ENCODE measurements at regions of chr15 and their contacts with region 1.

Region 1: DNA sequence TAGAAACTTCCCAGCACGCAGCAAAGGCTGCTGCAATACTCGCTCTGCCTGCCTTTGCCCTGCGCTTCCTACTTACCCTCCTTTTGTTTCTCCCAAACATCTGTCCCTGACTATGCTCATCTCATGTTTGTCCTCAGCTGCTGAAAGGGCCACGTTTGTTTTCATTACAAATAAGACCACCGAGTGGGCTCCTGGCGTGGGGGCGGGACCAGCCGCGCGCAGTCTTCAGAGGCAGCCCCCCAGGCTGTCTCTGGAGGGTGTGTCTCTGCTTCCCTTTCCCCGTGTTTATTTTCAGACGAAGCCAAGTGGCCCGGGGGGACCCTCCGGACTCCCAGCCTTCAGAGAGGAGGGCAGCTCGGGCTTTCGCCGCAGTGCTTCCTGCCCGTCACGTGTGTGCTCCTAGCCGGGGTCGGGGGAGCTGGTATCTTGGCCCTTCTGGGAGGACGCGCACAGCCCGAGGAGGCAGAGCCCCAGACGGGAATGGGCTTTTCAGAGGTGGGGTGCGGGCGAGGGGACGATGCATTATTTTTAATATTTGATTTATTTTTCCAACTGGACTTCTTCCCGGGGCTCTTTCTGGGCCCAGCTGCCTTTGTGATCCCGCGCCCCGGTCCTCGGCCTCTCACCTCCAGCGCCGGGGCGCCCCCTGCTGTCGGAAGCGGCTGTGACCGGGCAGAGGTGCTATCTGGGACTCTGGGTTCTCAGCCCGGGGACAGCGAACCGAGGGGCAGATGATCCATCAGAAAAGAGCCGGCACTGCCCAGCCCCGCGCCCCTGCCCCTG is 70.0 kb upstream of the CGNL1 start:
- DNase-seq: peak; percentile 52 to 85 (median 75)
- H3K4me3 ChIP-seq: peak overlapping the region; percentile 36 to 86 (median 65)
- H3K27ac ChIP-seq: peak overlapping the region in 23 of 59 donors; percentile 1 to 81 (median 34)
- H3K27me3 ChIP-seq: no peaks in the 10 kb centered on the region
- CTCF ChIP-seq: peak; percentile 59 to 95 (median 88)

Region 2: DNA sequence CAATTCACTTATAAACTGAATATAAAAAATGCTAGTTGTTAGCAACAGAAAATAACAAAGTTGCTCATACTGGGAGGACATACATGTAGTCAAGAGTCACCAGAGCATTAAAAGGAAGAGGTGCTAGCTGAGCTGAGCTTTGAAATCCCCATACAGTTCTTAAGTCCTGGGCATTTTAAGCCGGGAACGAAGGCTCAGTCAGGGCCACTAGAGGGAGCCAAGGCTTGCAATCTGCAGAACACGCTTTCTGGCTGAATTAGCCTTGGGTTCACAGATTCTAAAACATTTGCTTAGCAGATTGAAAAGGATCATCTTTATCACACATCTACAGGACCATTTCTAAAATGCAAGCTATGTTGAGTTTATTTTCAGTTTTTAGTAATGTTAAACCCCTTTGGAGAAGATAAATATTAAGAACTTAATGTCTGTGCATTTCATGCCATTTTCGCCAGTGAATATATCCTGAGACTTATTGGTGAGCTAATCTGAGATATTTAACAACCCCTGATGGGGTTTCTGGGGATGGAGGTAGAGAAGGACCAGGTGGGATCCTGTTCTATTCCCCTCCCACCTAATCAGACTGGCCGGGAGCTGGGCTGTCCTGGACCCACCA is 815.1 kb before region 1 on chr15:
- intact Hi-C with region 1: loop called (anchors 5 to 10 kb)
- DNase-seq: peak; percentile 43 to 85 (median 74)
- H3K4me3 ChIP-seq: no peak overlapping the region
- H3K27ac ChIP-seq: no peak overlapping the region
- H3K27me3 ChIP-seq: no peaks in the 10 kb centered on the region
- CTCF ChIP-seq: peak; percentile 64 to 90 (median 82)

Region 3: GRCh38 chr15:56821721-56822425 is 484.5 kb before region 1 on chr15:
- intact Hi-C with region 1: loop called in 1 of 2 experiments (anchors 5 kb)
- DNase-seq: peak in 8 of 10 donors; percentile 15 to 74 (median 54)
- H3K4me3 ChIP-seq: no peak overlapping the region
- H3K27ac ChIP-seq: no peak overlapping the region
- H3K27me3 ChIP-seq: no peaks in the 10 kb centered on the region
- CTCF ChIP-seq: peak in 55 of 56 donors; percentile 35 to 91 (median 67)

Region 4: DNA sequence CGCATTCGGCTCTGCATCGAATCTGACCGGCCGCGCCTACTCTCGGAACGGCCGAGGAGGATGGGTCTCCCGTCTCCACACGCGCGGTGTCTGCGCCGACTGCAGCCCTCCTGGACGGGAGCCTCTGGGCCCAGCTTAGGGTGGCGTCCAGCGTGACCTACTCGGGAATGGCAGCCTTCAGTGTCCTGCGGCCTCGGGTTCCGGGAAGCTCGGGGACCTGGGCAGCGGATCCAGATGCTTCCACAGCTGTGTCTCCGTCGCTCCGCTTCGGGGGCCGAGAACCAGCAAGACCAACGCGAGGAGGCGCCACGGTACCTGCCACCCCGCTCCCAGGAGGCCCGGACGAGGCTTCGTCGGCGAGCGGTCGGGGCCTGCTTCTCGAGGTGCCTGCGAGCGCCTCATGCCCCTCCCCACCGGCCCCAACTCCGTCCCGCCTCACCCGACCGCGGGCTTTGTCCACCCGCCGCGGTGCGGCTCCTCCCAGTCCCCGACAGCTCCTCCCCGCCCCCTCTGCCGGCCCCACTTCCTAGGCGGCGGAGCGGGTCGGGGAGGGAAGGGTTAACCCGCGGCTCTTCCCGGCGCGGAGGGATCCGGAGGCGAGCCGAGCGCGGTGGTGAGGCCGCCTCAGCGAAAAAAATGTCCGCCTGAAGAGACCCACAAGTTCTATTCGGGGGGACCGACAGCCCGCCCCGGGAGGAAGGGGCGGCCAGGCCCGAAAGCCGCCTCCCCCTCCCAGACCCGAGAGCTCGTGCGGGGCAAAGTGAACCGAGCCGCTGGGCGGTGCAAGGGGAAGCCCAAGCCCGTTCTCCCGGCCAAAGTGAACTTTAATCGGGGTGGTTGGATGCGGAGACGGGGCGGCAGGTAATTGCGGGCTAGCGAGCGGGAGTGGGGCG is 388.1 kb before region 1 on chr15 and contains the start of gene TCF12:
- intact Hi-C with region 1: loop called in 1 of 2 experiments (anchors 10 kb)
- DNase-seq: peak; percentile 76 to 94 (median 87)
- H3K4me3 ChIP-seq: peak within 1 kb of the TSS; percentile 71 to 98 (median 87)
- H3K27ac ChIP-seq: peak within 1 kb of the TSS; percentile 83 to 99 (median 97)
- H3K27me3 ChIP-seq: no peaks in the 10 kb centered on the region
- CTCF ChIP-seq: peak in 53 of 56 donors; percentile 29 to 77 (median 56)
- total RNA-seq, gene TCF12: 63.4 to 217 (median 109) TPM

Region 5: GRCh38 chr15:57146506-57147201 is 159.7 kb before region 1 on chr15:
- intact Hi-C with region 1: loop called (anchors 2 kb)
- DNase-seq: no peak
- H3K4me3 ChIP-seq: peak overlapping the region in 56 of 59 donors; percentile 1 to 57 (median 36)
- H3K27ac ChIP-seq: peak overlapping the region in 51 of 59 donors; percentile 4 to 88 (median 54)
- H3K27me3 ChIP-seq: no peaks in the 10 kb centered on the region
- CTCF ChIP-seq: peak; percentile 70 to 96 (median 85)

Region 6: DNA sequence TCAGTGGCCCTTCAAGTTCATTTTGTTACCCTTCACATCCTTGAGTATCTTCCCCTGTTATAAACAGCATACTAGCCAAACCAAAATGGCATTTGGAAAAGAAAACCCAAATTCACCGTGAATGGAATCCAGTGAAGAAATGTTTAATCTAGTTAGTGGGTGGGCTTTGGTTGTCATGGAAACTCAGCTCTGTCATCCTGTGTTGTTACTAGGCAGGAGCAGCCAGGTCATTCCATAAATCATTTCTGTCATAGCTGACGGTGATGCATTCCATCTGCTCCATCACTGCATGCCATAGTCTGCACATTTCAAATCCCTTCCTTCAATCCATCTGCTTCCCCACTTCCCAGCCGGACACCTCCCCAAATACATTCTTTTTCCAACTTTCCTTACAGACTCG is 70.5 kb before region 1 on chr15:
- intact Hi-C with region 1: loop called in 1 of 2 experiments (anchors 10 kb)
- DNase-seq: no peak
- H3K4me3 ChIP-seq: no peak overlapping the region
- H3K27ac ChIP-seq: peak overlapping the region in 3 of 59 donors; percentile 4 to 53 (median 18)
- H3K27me3 ChIP-seq: no peaks in the 10 kb centered on the region
- CTCF ChIP-seq: no peak

Region 7: DNA sequence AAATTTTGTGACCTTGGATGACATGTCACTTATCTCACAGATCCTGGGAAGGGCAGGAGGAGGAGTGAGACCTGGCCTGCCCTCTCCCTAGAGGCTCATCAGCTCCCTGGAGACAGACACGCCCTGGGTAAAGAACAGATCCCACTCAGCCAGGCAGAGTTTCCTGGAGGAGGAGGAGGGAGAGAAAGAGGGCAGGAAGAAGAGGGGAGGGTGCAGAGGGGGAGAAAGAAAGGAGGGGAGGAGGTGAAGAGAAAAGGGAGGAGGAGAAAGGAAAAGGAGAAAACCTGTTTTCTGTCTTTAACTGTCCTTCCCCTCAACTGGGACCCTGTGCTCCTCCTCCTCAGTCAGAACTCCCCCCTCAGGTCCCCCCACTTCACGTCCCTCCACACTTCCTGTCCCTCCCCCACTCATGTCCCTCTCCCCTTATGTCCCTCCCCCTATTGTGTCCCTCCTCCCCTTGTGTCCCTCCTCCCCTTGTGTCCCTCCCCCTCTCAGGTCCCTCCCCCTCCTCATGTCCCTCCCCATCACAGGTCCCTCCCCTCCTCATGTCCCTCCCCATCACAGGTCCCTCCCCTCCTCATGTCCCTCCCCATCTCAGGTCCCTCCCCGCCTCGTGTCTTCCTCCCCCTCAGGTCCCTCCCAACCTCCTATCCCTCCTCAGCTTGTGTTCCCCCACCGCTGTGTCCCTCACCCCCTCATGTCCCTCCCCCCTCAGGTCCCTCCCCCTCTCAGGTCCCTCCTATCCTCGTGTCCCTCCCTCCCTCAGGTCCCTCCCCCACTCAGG is 17.6 kb after region 1 on chr15:
- intact Hi-C with region 1: no loop called
- DNase-seq: no peak
- H3K4me3 ChIP-seq: no peak overlapping the region
- H3K27ac ChIP-seq: no peak overlapping the region
- H3K27me3 ChIP-seq: no peaks in the 10 kb centered on the region
- CTCF ChIP-seq: no peak

Measured in dorsolateral prefrontal cortex (tissue), 120 donors.